Ovary (tissue), 10 donors: ENCODE measurements at regions of chr6 and their contacts with region 1.

Region 1: DNA sequence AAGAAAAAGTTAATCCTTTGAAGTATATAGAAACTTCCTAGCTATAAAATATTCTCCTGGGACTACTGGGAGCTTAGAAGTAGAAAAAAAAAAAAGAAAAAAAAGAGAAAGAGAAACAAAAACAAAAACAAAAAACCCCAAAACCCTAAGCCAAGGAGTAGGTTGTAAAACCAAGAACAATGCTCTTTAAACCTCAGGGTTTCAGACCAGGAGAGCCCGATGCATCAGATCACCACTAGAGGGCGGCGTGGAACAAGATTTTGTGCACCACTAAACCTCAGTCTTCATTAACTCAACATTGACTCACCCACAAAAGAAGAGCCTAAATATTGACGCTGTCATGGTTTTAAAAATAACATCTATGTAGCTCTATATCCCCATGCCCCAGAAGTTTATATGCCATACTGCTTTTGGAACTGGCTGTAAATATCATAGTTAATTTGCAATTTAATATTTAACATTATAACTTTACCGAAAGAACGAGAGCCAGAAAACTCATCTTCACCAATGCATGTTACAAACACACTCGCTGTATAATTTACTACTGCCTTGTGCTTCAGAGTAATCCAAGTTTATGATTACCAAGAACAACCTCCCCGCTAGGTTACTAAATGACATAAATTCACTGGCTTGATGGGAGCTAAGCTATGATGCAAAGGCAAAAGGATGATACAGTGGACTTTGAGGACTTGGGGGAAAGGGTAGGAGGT is 19.2 kb downstream of the MCUR1 start:
- DNase-seq: peak; percentile 73 to 87 (median 85)
- H3K4me3 ChIP-seq: no peak overlapping the region
- H3K27ac ChIP-seq: no peak overlapping the region
- H3K4me1 ChIP-seq: no peaks in the 10 kb centered on the region
- H3K27me3 ChIP-seq: no peaks in the 10 kb centered on the region
- CTCF ChIP-seq: peak; percentile 65 to 81 (median 67)
- EP300 ChIP-seq: no peak
- POLR2A ChIP-seq: no peak

Region 2: DNA sequence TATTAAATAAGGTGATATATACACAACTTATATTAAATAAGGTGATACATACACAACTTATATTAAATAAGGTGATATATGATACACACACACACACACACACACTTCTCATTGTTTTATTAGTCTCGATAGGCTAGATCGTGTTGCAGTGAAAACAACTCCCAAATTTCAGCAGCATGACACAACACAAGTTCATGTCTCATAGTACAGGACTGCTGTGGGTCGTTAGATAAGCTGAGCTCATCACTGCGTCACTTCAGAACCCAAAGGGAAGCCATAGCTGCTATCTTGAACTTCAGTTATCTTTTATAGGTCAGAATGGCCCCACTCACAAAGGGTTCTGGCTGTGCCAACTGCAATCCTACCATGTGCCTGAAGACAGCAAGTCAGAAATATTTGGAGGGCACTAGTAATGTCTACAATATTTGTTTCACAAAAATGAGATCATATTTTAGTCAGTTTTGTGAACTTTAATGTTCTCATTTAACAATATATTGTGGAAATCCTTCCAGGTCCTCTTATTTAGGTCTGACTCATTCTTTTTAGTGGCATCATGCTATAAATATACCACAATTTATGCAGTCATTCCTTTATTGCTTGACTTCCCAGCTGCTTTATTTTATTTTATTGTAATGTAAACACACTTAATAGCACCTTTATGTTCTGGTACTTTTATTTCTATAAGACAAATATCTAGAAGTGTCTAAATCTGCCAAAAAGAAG is 788.5 kb before region 1 on chr6:
- intact Hi-C with region 1: no loop called
- DNase-seq: no peak
- H3K4me3 ChIP-seq: no peak overlapping the region
- H3K27ac ChIP-seq: no peak overlapping the region
- H3K4me1 ChIP-seq: no peaks in the 10 kb centered on the region
- H3K27me3 ChIP-seq: no peaks in the 10 kb centered on the region
- CTCF ChIP-seq: no peak
- EP300 ChIP-seq: no peak
- POLR2A ChIP-seq: no peak

Region 3: DNA sequence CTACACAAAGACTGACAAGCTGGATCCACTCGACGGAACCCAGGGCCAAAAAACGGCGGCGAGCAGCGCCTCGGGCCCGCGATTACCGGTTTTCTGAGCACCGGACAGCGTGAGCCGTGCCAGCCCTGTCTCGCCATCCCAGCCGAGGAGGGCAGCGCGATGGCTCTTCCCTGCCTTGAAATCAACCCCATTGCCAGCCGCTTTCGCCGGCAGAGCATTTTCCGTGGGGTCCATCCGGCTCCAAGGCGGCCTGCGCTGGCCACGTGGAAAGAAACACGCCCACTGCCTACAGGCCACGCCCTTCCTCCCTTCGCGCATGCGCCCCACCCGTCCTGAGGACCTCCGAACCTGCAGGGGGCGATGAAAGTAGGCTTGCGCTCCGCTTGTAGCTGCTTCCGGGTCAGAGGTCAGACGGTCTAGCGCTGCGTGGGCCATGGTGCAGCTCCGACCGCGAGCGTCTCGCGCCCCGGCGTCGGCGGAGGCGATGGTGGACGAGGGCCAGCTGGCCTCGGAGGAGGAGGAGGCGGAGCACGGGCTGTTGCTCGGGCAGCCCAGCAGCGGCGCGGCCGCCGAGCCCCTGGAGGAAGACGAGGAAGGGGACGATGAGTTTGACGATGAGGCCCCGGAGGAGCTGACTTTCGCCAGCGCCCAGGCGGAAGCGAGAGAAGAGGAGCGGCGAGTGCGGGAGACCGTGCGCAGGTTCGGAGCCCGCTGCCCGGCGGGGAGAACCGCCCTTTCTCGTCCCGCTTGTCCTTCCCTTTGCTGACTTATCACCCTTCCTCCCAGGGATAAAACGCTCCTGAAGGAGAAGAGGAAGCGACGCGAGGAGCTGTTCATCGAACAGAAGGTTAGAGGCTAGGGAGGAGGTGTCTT is 180.0 kb before region 1 on chr6 and contains the start of gene NOL7:
- intact Hi-C with region 1: loop called in 1 of 4 experiments (anchors 10 kb)
- DNase-seq: peak; percentile 98 to 100 (median 99)
- H3K4me3 ChIP-seq: peak within 1 kb of the TSS; percentile 98
- H3K27ac ChIP-seq: peak within 1 kb of the TSS; percentile 10 to 78
- H3K4me1 ChIP-seq: peaks cover 1% of the 10 kb centered on the region
- H3K27me3 ChIP-seq: no peaks in the 10 kb centered on the region
- CTCF ChIP-seq: peak; percentile 96 to 99 (median 98)
- EP300 ChIP-seq: no peak
- POLR2A ChIP-seq: peak; percentile 77
- total RNA-seq, gene NOL7: 49.3 to 77.7 (median 58.6) TPM

Region 4: DNA sequence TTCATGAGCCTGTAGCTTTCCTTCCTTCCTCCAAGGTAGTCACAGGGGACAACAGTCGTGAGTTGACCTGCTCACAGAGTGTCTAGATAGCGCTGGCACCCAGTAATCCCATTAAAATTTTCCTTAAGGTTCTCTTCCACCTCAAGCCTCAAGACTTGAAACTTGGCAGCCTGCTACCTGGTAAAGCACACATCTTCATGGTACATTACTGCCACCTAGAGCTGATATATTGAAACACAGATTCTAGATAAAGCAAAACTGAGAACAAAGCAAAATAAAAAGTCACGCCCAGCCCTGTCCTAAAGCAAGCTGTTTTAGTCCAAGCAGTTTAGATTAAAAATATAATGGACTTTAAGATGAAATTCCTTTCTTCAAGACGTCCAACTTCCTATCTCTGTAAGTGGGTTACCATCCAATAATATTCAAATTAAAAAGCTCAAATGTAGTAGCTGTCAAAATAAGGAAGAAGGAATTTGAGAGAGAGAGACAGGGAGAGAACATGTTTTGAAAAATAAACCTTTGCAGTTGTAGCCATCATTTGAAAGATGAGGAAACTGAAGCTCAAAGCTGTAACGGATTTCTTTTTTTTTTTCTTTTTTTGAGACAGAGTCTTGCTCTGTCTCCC is 271.7 kb after region 1 on chr6:
- intact Hi-C with region 1: loop called in 2 of 4 experiments (anchors 10 kb)
- DNase-seq: no peak
- H3K4me3 ChIP-seq: no peak overlapping the region
- H3K27ac ChIP-seq: no peak overlapping the region
- H3K4me1 ChIP-seq: peaks cover 6% of the 10 kb centered on the region
- H3K27me3 ChIP-seq: no peaks in the 10 kb centered on the region
- CTCF ChIP-seq: peak; percentile 44 to 69 (median 59)
- EP300 ChIP-seq: no peak
- POLR2A ChIP-seq: no peak